Astrocyte of the cerebellum (primary cell): ENCODE measurements at regions of chr12 and their contacts with region 1.

Region 1: GRCh38 chr12:65818454-65819382 is 5.6 kb upstream of the HMGA2 start:
- DNase-seq: no peak
- H3K4me3 ChIP-seq: no peak overlapping the region
- CTCF ChIP-seq: no peak

Region 2: DNA sequence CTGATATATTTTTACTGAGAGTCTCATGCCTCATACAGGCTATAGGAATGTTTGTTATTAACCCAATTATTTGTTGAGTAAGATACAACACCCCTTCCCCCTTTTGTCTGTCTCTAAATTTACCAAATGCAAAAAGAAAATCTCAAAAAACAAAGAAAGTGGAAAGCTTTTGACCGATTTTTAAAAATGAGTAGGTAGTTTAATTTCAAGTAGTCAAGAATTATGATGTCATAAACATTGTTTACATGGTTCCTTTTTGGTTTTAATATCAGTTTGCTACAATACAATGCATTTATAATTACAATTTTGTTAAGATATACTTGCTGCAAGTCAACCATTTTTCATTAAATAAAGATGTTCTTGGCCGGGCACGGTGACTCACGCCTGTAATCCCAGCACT is 79.1 kb before region 1 on chr12:
- in situ Hi-C with region 1: loop called (anchors 5 kb)
- DNase-seq: no peak
- H3K4me3 ChIP-seq: no peak overlapping the region
- CTCF ChIP-seq: no peak

Region 3: GRCh38 chr12:65765436-65765813 is 53.3 kb before region 1 on chr12:
- in situ Hi-C with region 1: no loop called
- DNase-seq: peak; percentile 75
- H3K4me3 ChIP-seq: no peak overlapping the region
- CTCF ChIP-seq: no peak

Region 4: DNA sequence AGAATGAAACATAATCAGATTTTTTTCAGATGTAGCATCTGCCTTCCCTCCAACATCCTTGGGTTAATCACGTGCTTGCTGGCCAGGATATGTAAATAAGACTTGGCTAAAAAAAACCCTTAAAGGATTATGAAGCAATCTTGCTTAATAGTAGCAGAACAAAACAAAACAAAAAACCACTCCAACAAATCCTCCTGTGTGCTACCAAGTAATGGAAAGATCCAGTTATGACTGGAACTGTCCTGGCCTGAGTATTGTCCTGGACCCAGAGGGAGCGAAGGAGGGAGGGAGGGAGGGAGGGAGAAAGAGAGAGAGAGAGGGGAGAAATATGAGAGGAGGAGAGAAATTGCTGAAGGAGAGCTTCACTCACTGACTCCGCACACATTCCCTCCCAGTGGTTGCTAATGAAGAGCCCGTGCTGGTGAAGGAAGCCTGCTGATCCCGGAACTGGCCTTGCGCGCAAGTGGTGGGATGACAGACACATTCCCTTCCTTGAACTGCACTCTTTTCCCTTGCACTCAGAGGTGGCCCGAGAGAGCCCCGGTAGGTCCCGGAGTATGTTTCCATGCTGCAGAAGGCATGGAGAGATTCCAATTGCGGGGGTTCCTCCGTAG is 62.7 kb after region 1 on chr12:
- in situ Hi-C with region 1: no loop called
- DNase-seq: no peak
- H3K4me3 ChIP-seq: peak overlapping the region; percentile 39
- CTCF ChIP-seq: no peak